PC-9 (cell line): ENCODE measurements at regions of chr6 and their contacts with region 1.

Region 1: GRCh38 chr6:143700684-143701348 is 23.1 kb downstream of the PHACTR2 start:
- DNase-seq: no peak
- H3K4me3 ChIP-seq: no peak overlapping the region
- H3K27ac ChIP-seq: no peak overlapping the region
- H3K4me1 ChIP-seq: peaks cover 10% of the 10 kb centered on the region; the same call in 1 of the 2 replicates
- H3K27me3 ChIP-seq: no peaks in the 10 kb centered on the region
- CTCF ChIP-seq: no peak

Region 2: GRCh38 chr6:143450453-143451371 is 250.1 kb before region 1 on chr6 and contains the starts of genes ADAT2 and PEX3:
- CTCF ChIA-PET with region 1: no interaction called
- POLR2A ChIA-PET with region 1: no interaction called
- intact Hi-C with region 1: no loop called
- DNase-seq: peak; percentile 84 to 94
- H3K4me3 ChIP-seq: peak within 1 kb of the TSS; percentile 77
- H3K27ac ChIP-seq: peak within 1 kb of the TSS; percentile 47
- H3K4me1 ChIP-seq: peaks cover 22% of the 10 kb centered on the region
- H3K27me3 ChIP-seq: no peaks in the 10 kb centered on the region
- CTCF ChIP-seq: no peak
- total RNA-seq, gene ADAT2: 5.5 and 6.0 TPM in 2 replicates
- total RNA-seq, gene PEX3: 18.4 and 20.9 TPM in 2 replicates

Region 3: GRCh38 chr6:143885116-143885515 is 184.3 kb after region 1 on chr6:
- CTCF ChIA-PET with region 1: no interaction called
- POLR2A ChIA-PET with region 1: interaction called, 10 read pairs
- intact Hi-C with region 1: no loop called
- DNase-seq: no peak
- H3K4me3 ChIP-seq: no peak overlapping the region
- H3K27ac ChIP-seq: no peak overlapping the region
- H3K4me1 ChIP-seq: no peaks in the 10 kb centered on the region
- H3K27me3 ChIP-seq: no peaks in the 10 kb centered on the region
- CTCF ChIP-seq: no peak